Naive thymus-derived CD4-positive, alpha-beta T cell (primary cell): ENCODE measurements at regions of chr7 and their contacts with region 1.

Region 1: GRCh38 chr7:27784393-27785053 is 44.6 kb downstream of the TAX1BP1 start:
- DNase-seq: peak in 7 of 9 donors; percentile 30 to 54 (median 43)
- ATAC-seq: peak; percentile 73
- H3K4me3 ChIP-seq: no peak overlapping the region
- H3K4me3 Mint-ChIP-seq: no peak overlapping the region
- H3K27ac ChIP-seq: no peak overlapping the region
- H3K27ac Mint-ChIP-seq: peak overlapping the region in 1 of 9 donors; percentile 15
- H3K4me1 ChIP-seq: no peaks in the 10 kb centered on the region
- H3K4me1 Mint-ChIP-seq: peaks cover 4 to 35% (median 20%) of the 10 kb centered on the region in 7 donors
- H3K27me3 ChIP-seq: no peaks in the 10 kb centered on the region
- H3K27me3 Mint-ChIP-seq: no peaks in the 10 kb centered on the region

Region 2: DNA sequence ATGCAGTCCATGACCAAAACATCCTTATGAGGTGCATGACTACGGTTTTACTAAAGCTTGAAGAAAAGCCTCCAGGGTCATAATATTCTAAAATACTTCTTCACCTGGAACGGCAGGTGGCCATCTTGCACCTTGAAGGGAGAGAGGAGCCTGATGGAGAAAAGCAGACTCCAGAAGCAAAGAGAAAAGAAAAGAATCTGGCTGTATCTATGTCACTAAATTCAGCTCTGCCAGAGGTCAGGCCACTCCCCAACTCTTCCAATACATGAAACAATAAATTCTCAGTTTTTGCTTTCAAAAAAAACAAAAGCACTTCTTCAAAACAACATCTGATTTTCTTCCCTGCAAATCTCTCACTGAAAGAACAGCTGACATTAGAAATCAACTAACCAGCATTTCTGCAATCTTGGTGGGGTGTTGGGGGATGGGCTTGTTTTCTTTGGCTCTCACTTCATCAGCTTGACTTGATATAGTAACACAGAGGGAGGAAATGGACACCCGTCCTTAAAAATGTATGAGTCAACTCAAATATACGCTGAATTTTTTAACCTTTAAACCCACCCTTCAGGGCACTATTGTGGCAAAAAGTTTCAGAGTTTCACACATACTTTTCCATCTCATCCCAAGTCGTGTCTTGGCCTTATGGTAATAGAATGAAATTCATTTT is 143.5 kb before region 1 on chr7:
- CTCF ChIA-PET with region 1: interaction called, 5 read pairs
- POLR2A ChIA-PET with region 1: interaction called, 3 read pairs
- intact Hi-C with region 1: loop called in 1 of 2 experiments (anchors 2 kb)
- DNase-seq: no peak
- ATAC-seq: no peak
- H3K4me3 ChIP-seq: no peak overlapping the region
- H3K4me3 Mint-ChIP-seq: no peak overlapping the region
- H3K27ac ChIP-seq: no peak overlapping the region
- H3K27ac Mint-ChIP-seq: no peak overlapping the region
- H3K4me1 ChIP-seq: peaks cover 0 to 4% of the 10 kb centered on the region in 2 donors
- H3K4me1 Mint-ChIP-seq: peaks cover 7 to 49% (median 26%) of the 10 kb centered on the region in 7 donors
- H3K27me3 ChIP-seq: no peaks in the 10 kb centered on the region
- H3K27me3 Mint-ChIP-seq: no peaks in the 10 kb centered on the region

Region 3: DNA sequence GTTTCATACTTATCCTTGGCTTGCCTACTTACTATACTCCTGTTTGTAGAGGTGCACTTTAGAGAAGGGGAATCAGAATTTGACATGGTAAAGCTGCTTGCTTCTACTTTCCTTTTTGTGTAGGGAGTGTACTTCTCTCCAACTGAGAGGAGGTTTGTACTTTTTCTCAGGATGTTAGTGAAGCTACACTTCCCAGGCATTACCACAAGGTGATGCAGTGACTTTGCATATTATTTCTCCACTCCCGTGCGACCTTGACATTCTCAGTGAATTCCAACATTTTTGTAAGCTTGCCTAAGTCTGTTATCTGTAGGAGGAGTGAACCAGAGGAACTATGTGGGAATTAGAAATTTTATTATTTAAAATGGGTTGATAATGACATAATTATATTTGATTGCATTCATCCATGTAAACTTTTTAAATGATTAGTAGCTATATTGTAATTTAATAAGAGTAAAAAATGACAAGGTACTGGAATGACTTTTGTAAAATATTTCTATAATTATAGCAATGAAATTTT is 39.4 kb before region 1 on chr7:
- CTCF ChIA-PET with region 1: interaction called, 3 read pairs
- POLR2A ChIA-PET with region 1: interaction called, 4 read pairs
- intact Hi-C with region 1: loop called (anchors 2 to 5 kb)
- DNase-seq: peak in 4 of 9 donors; percentile 5 to 14 (median 9)
- ATAC-seq: no peak
- H3K4me3 ChIP-seq: no peak overlapping the region
- H3K4me3 Mint-ChIP-seq: peak overlapping the region in 5 of 10 donors; percentile 26 to 58 (median 54)
- H3K27ac ChIP-seq: no peak overlapping the region
- H3K27ac Mint-ChIP-seq: no peak overlapping the region
- H3K4me1 ChIP-seq: peaks cover 18 to 23% of the 10 kb centered on the region in 2 donors
- H3K4me1 Mint-ChIP-seq: peaks cover 35 to 81% (median 66%) of the 10 kb centered on the region in 7 donors
- H3K27me3 ChIP-seq: no peaks in the 10 kb centered on the region
- H3K27me3 Mint-ChIP-seq: no peaks in the 10 kb centered on the region

Region 4: DNA sequence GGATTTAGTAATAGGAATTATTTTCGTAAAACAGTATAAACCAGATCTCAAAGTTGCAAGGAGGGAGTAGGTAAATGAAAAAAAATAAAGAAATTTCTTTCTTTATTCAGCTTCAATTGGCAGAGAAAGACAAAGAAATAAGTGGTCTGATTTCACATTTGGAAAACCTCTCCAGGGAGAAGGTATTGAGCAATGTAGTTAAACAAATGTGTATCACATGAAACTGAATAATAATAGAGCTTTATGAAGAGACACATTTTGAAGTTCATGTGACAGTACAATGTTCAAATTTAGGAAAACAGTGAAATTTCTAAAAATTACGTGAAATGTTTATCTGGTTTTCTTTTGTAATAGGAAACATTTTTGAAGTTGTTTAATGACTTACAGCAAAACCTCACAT is 18.5 kb after region 1 on chr7:
- CTCF ChIA-PET with region 1: no interaction called
- POLR2A ChIA-PET with region 1: no interaction called
- intact Hi-C with region 1: loop called in 1 of 2 experiments (anchors 2 kb)
- DNase-seq: no peak
- ATAC-seq: no peak
- H3K4me3 ChIP-seq: no peak overlapping the region
- H3K4me3 Mint-ChIP-seq: no peak overlapping the region
- H3K27ac ChIP-seq: no peak overlapping the region
- H3K27ac Mint-ChIP-seq: no peak overlapping the region
- H3K4me1 ChIP-seq: no peaks in the 10 kb centered on the region
- H3K4me1 Mint-ChIP-seq: peaks cover 0 to 24% (median 5%) of the 10 kb centered on the region in 7 donors
- H3K27me3 ChIP-seq: no peaks in the 10 kb centered on the region
- H3K27me3 Mint-ChIP-seq: no peaks in the 10 kb centered on the region

Region 5: DNA sequence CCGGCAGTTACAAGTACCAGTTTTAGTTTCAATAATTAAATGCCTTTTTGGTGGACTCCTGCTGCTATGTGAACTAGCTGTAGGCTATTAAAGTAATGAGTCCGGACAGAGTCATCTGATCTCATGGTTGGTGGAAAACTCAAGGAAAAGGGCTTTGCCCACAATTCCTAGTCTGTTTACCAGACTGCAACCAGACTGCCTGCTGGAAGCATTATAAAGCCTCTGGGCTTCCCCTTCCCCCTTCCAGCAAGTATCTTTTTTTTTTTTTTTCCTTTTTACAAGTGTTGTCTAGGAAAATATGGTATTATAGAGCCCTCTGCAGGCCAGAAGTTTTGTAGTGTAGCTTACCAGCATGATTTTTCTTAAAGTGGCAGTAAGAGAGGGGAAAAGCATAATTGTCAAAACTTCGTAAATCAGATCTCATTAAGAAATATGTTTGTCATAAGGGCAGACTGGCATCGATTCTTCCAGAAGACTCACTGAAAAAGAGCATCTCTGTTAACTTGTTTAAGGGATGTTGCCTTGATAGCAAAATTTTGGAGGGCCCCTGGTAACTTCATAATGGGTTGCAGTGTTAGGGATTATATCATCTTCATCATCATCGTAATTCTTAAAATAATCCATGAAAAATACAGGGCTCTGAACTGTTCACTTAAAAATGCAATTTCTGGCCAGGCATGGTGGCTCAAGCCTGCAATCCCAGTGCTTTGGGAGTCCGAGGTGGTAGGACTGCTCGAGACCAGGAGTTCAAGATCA is 136.7 kb after region 1 on chr7:
- CTCF ChIA-PET with region 1: interaction called, 8 read pairs
- POLR2A ChIA-PET with region 1: no interaction called
- intact Hi-C with region 1: loop called in 1 of 2 experiments (anchors 5 kb)
- DNase-seq: peak in 6 of 9 donors; percentile 17 to 59 (median 44)
- ATAC-seq: peak; percentile 67
- H3K4me3 ChIP-seq: no peak overlapping the region
- H3K4me3 Mint-ChIP-seq: no peak overlapping the region
- H3K27ac ChIP-seq: no peak overlapping the region
- H3K27ac Mint-ChIP-seq: peak overlapping the region in 1 of 9 donors; percentile 11
- H3K4me1 ChIP-seq: no peaks in the 10 kb centered on the region
- H3K4me1 Mint-ChIP-seq: peaks cover 0 to 11% (median 1%) of the 10 kb centered on the region in 7 donors
- H3K27me3 ChIP-seq: no peaks in the 10 kb centered on the region
- H3K27me3 Mint-ChIP-seq: no peaks in the 10 kb centered on the region